Gastrocnemius medialis (tissue), 4 donors: ENCODE measurements at regions of chr7 and their contacts with region 1.

Region 1: DNA sequence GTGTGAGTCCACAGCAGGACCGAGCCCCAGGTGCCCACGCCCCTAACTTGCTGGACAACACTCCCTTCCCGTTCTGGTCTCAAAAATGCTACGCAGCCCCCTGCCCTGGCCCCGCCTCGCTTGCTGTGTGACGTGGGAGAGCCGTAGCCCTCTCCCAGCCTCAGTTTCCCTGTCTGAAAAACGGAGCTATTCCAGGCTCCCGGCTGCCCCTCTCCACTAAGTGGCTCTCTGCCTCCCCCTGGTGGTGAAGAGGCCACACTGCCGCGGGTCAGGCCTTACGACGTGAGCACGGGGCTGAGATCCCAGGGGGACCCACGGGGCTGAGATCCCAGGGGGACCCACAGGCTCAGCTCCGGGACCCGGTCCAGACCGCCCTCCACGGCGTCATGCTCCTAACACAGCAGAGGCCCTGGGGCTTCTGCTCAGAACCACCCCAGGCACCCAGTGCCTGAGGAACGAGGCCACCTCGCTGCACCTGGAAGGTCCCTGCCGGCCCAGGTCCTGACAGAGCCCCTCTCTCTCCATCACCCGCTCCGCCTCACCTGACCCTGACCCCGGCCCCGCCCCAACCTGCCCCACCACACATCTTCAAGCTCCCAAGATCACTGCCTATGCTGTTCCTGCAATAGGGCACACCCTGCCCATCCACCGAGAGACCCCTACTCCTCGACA is 26.7 kb downstream of the MICALL2 start:
- DNase-seq: peak; percentile 29 to 41
- ATAC-seq: peak; percentile 50 to 74
- H3K4me3 ChIP-seq: no peak overlapping the region
- H3K27ac ChIP-seq: no peak overlapping the region
- H3K4me1 ChIP-seq: no peaks in the 10 kb centered on the region
- H3K27me3 ChIP-seq: peaks cover 17 to 34% (median 27%) of the 10 kb centered on the region in 3 donors
- CTCF ChIP-seq: peak; percentile 63 to 97 (median 89)
- POLR2A ChIP-seq: no peak

Region 2: GRCh38 chr7:1054861-1055450 is 377.6 kb before region 1 on chr7:
- in situ Hi-C with region 1: no loop called
- intact Hi-C with region 1: no loop called
- DNase-seq: peak in 1 of 2 donors; percentile 42
- ATAC-seq: peak in 1 of 2 donors; percentile 20
- H3K4me3 ChIP-seq: peak overlapping the region; percentile 34 to 48 (median 40)
- H3K27ac ChIP-seq: peak overlapping the region; percentile 41 to 73 (median 68)
- H3K4me1 ChIP-seq: peaks cover 30 to 47% of the 10 kb centered on the region in 2 donors
- H3K27me3 ChIP-seq: no peaks in the 10 kb centered on the region
- CTCF ChIP-seq: no peak
- POLR2A ChIP-seq: no peak

Region 3: GRCh38 chr7:1473864-1474512 is 41.4 kb after region 1 on chr7:
- in situ Hi-C with region 1: no loop called
- intact Hi-C with region 1: loop called (anchors 1 kb)
- DNase-seq: peak; percentile 56 to 77
- ATAC-seq: peak; percentile 58 to 88
- H3K4me3 ChIP-seq: no peak overlapping the region
- H3K27ac ChIP-seq: no peak overlapping the region
- H3K4me1 ChIP-seq: no peaks in the 10 kb centered on the region
- H3K27me3 ChIP-seq: no peaks in the 10 kb centered on the region
- CTCF ChIP-seq: peak; percentile 68 to 93 (median 86)
- POLR2A ChIP-seq: no peak